GM12878 (cell line): ENCODE measurements at regions of chr3 and their contacts with region 1.

Region 1: DNA sequence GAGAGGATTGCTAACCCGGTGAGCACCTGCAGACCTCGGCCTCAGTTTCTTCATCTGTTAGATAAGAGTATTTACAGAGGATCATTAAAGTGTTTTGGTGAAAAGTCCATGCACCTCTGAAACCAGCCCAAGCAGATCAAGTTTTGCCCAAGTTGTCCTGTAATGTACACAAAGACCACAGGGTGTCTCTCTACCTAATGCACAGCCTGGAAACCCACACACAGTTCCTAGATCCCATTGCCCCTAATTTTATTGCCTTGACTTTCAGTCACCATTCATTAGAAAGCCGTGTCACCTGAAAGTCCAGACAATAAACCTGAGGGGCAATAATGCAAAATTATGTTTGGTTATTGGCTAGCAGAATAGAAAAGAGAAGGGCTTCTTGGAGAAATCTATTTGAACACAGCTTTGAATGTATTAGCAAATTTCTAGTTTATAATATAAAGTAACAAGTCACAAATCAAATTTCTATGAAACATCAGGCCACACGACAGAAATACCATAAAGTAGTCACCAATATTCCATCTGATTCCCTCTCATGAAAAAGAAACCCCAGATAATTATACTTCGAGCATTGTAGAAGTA is 161.3 kb upstream of the SLC2A2 start:
- DNase-seq: no peak
- ATAC-seq: peak; percentile 59
- H3K4me3 ChIP-seq: no peak overlapping the region
- H3K27ac ChIP-seq: no peak overlapping the region
- H3K4me1 ChIP-seq: peaks cover 42% of the 10 kb centered on the region
- H3K27me3 ChIP-seq: no peaks in the 10 kb centered on the region
- CTCF ChIP-seq: peak; percentile 65 to 77 (median 68)
- EP300 ChIP-seq: no peak
- POLR2A ChIP-seq: no peak
- RAD21 ChIP-seq: peak; percentile 80

Region 2: GRCh38 chr3:171142985-171143384 is 44.8 kb before region 1 on chr3:
- CTCF ChIA-PET with region 1: no interaction called
- POLR2A ChIA-PET with region 1: no interaction called
- RAD21 ChIA-PET with region 1: no interaction called
- SMC1A ChIA-PET with region 1: no interaction called
- in situ Hi-C with region 1: no loop called
- intact Hi-C with region 1: no loop called
- DNase-seq: no peak
- ATAC-seq: no peak
- H3K4me3 ChIP-seq: no peak overlapping the region
- H3K27ac ChIP-seq: no peak overlapping the region
- H3K4me1 ChIP-seq: no peaks in the 10 kb centered on the region
- H3K27me3 ChIP-seq: no peaks in the 10 kb centered on the region
- CTCF ChIP-seq: no peak
- EP300 ChIP-seq: no peak
- POLR2A ChIP-seq: no peak
- RAD21 ChIP-seq: no peak

Region 3: DNA sequence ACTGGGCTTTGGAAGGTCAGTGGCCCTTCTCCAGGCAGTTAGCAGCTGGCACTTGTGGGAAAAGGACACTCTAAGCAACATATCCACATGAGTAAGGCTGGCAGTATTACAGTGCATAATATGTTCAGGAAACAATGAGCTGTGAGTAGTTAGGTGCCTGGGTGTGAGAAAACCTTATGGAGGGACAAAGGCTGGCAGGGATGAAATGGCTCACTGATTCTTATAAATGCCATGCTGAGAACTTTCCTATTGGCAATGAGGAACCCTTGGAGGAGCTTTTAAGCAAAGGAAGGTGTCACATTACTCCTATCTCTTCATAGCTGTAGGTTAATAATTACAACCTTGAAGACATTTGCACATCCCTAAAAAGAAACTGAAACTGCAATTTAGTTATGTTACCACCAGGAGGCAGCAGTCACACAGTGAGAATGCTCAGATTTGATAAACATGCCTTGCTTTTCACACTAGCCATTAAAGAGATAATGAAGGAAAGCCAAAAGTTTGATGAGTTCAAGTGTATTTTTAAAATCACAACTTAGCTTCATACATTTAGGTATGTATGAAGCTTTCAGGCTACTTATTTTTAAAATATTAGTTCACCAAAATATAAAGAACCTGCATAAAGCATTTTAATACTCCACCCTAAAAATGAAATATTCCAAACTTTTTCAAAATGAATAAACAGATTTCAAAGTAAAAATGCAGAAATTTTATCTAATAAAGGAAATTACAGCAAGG is 24.6 kb before region 1 on chr3:
- CTCF ChIA-PET with region 1: interaction called, 9 read pairs
- POLR2A ChIA-PET with region 1: no interaction called
- RAD21 ChIA-PET with region 1: interaction called, 4 read pairs
- SMC1A ChIA-PET with region 1: interaction called, 15 read pairs
- in situ Hi-C with region 1: no loop called
- intact Hi-C with region 1: no loop called
- DNase-seq: no peak
- ATAC-seq: peak; percentile 50
- H3K4me3 ChIP-seq: no peak overlapping the region
- H3K27ac ChIP-seq: no peak overlapping the region; the same call in 1 of the 2 replicates
- H3K4me1 ChIP-seq: peaks cover 14% of the 10 kb centered on the region
- H3K27me3 ChIP-seq: no peaks in the 10 kb centered on the region
- CTCF ChIP-seq: peak; percentile 58 to 87 (median 63); a peak in 5 of 6 replicates
- EP300 ChIP-seq: no peak
- POLR2A ChIP-seq: no peak
- RAD21 ChIP-seq: peak; percentile 77

Region 4: DNA sequence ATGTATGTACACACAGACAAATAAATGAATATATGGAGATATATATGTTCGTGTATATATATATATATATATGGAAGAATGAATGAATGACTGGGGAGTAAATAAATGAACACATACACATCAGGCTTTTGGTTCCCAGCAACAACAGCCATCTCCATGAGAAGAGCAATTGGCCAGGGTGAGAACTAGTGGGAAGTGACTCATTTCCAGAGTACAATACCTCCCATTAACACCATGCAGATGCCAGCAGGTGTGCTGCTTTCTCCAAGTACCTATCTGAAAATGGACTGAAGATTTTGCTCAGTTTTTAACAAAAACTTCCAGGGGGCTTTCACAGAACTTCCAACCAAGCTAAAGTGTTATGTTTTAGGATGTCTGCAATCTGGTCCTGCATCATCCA is 18.5 kb after region 1 on chr3:
- CTCF ChIA-PET with region 1: interaction called, 13 read pairs
- POLR2A ChIA-PET with region 1: no interaction called
- RAD21 ChIA-PET with region 1: interaction called, 4 read pairs
- SMC1A ChIA-PET with region 1: interaction called, 33 read pairs
- in situ Hi-C with region 1: no loop called
- intact Hi-C with region 1: no loop called
- DNase-seq: peak; percentile 62
- ATAC-seq: peak; percentile 83
- H3K4me3 ChIP-seq: no peak overlapping the region
- H3K27ac ChIP-seq: peak overlapping the region; percentile 10; the same call in 1 of the 2 replicates
- H3K4me1 ChIP-seq: peaks cover 4% of the 10 kb centered on the region; the same call in 1 of the 2 replicates
- H3K27me3 ChIP-seq: no peaks in the 10 kb centered on the region
- CTCF ChIP-seq: no peak
- EP300 ChIP-seq: no peak
- POLR2A ChIP-seq: no peak
- RAD21 ChIP-seq: no peak

Region 5: DNA sequence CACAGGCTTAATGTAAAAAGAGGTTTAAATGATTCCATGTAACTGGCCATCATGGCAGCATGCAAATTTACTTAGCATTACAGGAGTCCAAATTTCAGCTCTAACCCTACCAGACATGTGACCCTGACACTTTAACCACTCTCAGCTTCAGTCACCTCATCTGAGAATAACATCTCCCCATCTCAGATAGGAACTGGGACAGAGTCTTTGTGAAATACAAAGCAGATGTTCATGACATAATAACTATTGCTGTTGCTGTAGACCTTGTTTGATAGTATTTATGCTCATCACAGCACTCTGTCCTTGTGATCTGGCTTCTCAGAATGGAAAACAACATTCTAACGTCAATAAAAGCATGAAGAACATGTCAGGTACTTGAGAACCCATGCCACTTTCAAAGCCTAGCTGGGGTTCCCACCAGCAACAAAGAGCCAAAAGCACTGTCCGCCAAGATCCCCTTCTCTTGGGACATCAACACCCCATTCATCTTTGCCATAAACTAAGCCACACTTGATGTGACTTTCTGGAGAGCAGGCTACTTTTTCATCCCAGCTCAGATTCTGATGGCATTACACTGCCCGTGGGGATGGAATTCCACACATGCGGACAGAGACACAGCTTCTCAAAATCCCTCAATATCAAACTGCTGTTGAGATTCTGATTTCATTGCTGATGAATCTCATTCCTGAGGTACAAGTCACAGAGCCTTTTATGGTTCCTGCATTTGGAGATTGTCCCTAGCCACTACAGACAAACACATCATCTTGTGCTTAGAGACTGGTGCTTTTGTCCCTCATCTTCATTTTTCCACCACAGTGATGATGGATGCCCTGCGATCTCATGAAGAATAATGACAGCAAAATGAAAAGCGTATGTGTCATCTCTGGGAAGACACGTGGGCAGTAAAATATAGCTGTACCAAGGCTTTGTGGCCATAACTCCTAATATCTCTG is 69.7 kb after region 1 on chr3:
- CTCF ChIA-PET with region 1: interaction called, 7 read pairs
- POLR2A ChIA-PET with region 1: interaction called, 3 read pairs
- RAD21 ChIA-PET with region 1: interaction called, 7 read pairs
- SMC1A ChIA-PET with region 1: interaction called, 48 read pairs
- in situ Hi-C with region 1: no loop called
- intact Hi-C with region 1: loop called (anchors 10 kb)
- DNase-seq: peak; percentile 76
- ATAC-seq: peak; percentile 74
- H3K4me3 ChIP-seq: peak overlapping the region; percentile 31; the same call in 1 of the 2 replicates
- H3K27ac ChIP-seq: peak overlapping the region; percentile 87
- H3K4me1 ChIP-seq: peaks cover 86% of the 10 kb centered on the region
- H3K27me3 ChIP-seq: no peaks in the 10 kb centered on the region
- CTCF ChIP-seq: no peak
- EP300 ChIP-seq: peak in 1 of 2 experiments; percentile 63; a peak in 2 of 4 replicates
- POLR2A ChIP-seq: no peak
- RAD21 ChIP-seq: 0 out of 2 replicates have a peak, but pooled peaks have one; percentile 10

Region 6: DNA sequence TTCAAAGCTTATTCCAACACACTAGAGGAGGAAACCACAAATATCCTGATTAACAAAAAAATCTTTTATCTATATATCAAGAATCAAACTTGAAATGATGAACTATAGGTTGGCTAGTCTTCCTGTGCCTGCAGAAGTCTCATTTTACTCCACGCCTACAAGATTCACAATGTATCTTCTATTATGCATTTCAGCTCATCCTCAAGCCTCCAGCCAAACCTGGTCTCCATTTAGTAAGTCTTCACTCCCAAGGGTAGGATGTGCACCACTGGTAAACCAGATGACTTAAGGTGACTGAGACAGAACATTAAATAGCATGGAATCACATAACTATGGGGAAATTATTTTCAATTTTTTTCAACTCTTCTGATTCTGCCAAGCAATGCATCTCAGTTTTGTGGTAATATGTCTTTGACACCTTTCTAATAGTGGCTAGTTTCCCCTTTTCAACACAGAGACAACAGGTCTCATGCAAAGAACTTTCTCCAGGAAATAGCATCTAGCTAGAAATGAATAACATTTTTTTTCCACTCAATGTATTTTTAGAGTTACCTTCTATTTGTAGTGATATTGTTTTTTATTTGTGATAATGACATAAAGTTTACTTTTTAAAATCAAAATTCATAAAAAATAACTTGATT is 105.5 kb after region 1 on chr3:
- CTCF ChIA-PET with region 1: interaction called, 23 read pairs
- POLR2A ChIA-PET with region 1: no interaction called
- RAD21 ChIA-PET with region 1: interaction called, 3 read pairs
- SMC1A ChIA-PET with region 1: interaction called, 13 read pairs
- in situ Hi-C with region 1: no loop called
- intact Hi-C with region 1: no loop called
- DNase-seq: no peak
- ATAC-seq: peak; percentile 67
- H3K4me3 ChIP-seq: no peak overlapping the region
- H3K27ac ChIP-seq: peak overlapping the region; percentile 60
- H3K4me1 ChIP-seq: peaks cover 60% of the 10 kb centered on the region
- H3K27me3 ChIP-seq: no peaks in the 10 kb centered on the region
- CTCF ChIP-seq: no peak
- EP300 ChIP-seq: 0 out of 4 replicates have a peak, but pooled peaks have one; percentile 7 to 22
- POLR2A ChIP-seq: no peak
- RAD21 ChIP-seq: no peak

Region 7: DNA sequence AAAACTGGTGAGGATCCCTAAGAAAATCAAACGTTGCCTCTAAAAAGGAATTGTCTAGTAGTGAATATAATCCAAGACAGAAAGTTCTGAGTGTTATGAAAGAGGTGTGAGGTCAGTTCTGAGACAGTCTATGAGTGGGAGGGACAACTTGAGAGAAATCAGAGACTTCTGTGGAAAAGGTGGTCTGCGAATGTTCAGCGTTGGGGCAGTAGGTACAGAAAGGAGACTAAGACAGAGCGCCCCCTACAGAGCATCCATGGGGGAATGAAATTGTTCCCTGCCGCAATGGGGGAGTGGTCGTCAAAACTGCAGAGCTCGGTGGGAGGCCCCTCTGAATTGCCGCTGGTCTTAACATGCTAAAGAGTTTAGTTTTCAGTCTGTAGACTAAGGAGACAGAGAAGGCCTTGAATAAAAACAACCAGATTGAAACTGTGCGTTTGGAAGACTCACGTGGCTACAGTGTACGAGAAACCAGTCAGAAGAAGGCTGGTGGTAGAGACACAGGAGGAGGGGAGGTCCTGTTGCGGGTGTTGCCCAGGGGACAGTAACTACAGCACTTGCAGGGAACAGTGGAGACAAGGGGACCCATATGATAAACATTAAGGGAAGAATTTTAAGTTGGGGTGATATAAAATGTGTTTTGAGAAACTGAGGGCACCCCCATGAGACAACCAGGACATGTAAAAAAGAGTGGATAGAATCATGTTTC is 265.5 kb after region 1 on chr3:
- CTCF ChIA-PET with region 1: interaction called, 10 read pairs
- POLR2A ChIA-PET with region 1: no interaction called
- RAD21 ChIA-PET with region 1: interaction called, 9 read pairs
- SMC1A ChIA-PET with region 1: interaction called, 30 read pairs
- in situ Hi-C with region 1: loop called (anchors 5 kb)
- intact Hi-C with region 1: no loop called
- DNase-seq: no peak
- ATAC-seq: peak; percentile 34
- H3K4me3 ChIP-seq: 0 out of 2 replicates have a peak overlapping the region, but pooled peaks have one; percentile 2
- H3K27ac ChIP-seq: no peak overlapping the region
- H3K4me1 ChIP-seq: peaks cover 17% of the 10 kb centered on the region
- H3K27me3 ChIP-seq: no peaks in the 10 kb centered on the region
- CTCF ChIP-seq: peak; percentile 42 to 63 (median 43); a peak in 5 of 6 replicates
- EP300 ChIP-seq: no peak
- POLR2A ChIP-seq: no peak
- RAD21 ChIP-seq: 0 out of 2 replicates have a peak, but pooled peaks have one; percentile 39

Region 8: GRCh38 chr3:171809556-171809820 is 621.7 kb after region 1 on chr3:
- CTCF ChIA-PET with region 1: no interaction called
- POLR2A ChIA-PET with region 1: no interaction called
- RAD21 ChIA-PET with region 1: no interaction called
- SMC1A ChIA-PET with region 1: no interaction called
- in situ Hi-C with region 1: no loop called
- intact Hi-C with region 1: no loop called
- DNase-seq: no peak
- ATAC-seq: peak; percentile 52
- H3K4me3 ChIP-seq: peak overlapping the region; percentile 69; the same call in 1 of the 2 replicates
- H3K27ac ChIP-seq: peak overlapping the region; percentile 45
- H3K4me1 ChIP-seq: no peaks in the 10 kb centered on the region
- H3K27me3 ChIP-seq: no peaks in the 10 kb centered on the region
- CTCF ChIP-seq: no peak
- EP300 ChIP-seq: peak in 1 of 2 experiments; percentile 42; a peak in 1 of 4 replicates
- POLR2A ChIP-seq: no peak
- RAD21 ChIP-seq: no peak